Activated CD8-positive, alpha-beta T cell treated with anti-CD3 and anti-CD28 coated beads, Interleukin-2, amount 10 ng/mL, durations not matched to agents 7 days and 5 days (primary cell): ENCODE measurements at regions of chr2 and their contacts with region 1.

Region 1: DNA sequence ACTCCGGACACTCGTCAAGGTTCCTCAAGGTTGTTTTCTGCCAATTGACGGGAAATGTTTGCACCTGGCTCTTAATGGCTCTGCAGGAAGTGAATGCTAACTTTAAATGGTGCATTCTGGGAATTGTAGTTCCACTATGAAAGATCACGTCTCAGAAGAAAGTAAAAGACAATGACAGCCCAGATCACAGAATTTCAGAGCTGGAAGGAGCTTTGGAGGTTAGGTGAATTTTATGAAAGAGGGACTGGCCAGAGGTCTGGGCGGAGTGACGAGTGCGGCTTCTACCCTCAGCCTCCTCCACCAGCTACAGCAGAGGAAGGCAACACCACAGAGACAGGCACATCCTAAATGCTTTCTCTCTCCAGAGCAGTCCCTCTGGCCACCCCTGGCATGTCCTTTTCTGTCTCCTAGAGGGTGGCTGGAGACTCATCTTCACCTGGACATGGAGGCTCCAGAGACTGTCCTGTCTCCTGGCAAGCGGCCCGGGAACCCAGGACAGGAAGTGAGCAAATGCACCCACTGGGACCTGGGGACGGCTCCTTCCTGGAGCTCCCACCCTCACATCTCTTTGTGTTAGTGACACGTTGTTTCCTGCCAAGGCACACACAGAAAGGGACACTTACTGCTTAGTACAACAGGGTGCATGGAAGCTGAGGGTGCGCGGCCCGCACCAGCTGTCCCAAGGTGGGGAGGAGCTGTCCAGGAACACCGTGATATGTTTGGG is 19.4 kb downstream of the THAP4 start:
- DNase-seq: peak; percentile 61
- ATAC-seq: peak; percentile 80
- H3K4me3 Mint-ChIP-seq: peak overlapping the region; percentile 73
- H3K27ac Mint-ChIP-seq: peak overlapping the region; percentile 92
- H3K4me1 Mint-ChIP-seq: peaks cover 47% of the 10 kb centered on the region
- H3K27me3 Mint-ChIP-seq: no peaks in the 10 kb centered on the region

Region 2: DNA sequence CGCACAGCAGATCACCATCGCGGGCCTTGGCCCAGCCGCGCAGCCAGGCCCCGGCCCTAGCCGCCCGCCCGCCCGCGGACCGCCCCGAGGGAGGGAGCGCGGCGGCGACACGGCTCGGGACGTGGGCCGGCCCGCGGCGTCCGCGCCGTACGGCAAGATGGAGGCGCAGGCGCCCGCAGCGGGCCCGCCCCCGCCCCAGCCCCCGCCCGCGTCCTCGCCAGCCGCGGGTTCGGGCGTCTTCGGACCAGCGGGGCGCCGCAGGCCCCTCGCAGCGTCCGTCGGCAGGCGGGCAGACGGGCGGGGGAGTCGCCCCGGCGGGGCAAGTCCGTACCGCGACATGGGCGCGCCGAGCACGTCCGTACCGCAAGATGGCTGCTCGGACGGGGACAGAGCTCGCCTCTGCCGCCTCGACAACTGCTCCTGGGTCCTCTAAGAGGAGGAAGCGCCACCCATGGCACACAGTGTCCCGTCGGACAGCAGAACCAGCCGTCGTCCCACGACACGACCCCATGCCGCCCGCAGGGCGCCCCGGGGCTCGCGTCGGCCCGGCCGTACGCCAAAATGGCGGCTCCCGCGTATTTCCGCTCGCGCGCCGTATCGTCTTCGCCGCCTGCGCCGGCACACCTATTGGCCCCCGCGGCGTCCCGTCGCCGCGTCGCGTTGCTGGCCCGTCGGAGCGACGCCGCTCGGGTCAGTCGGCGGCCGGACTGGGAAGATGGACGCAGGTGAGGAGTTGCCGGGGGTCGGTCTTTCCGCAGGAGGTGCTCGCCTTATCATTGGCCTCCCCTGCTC is 19.6 kb after region 1 on chr2 and contains the starts of genes ATG4B and THAP4:
- CTCF ChIA-PET with region 1: interaction called, 3 read pairs
- POLR2A ChIA-PET with region 1: interaction called, 12 read pairs
- DNase-seq: peak; percentile 81
- ATAC-seq: peak; percentile 76
- H3K4me3 Mint-ChIP-seq: peak within 1 kb of the TSS; percentile 90
- H3K27ac Mint-ChIP-seq: peak within 1 kb of the TSS; percentile 94
- H3K4me1 Mint-ChIP-seq: peaks cover 49% of the 10 kb centered on the region
- H3K27me3 Mint-ChIP-seq: no peaks in the 10 kb centered on the region
- total RNA-seq, gene ATG4B: 81.2 to 94.6 TPM
- total RNA-seq, gene THAP4: 32.3 to 37.4 TPM